Thyroid gland (tissue), 4 donors: ENCODE measurements at regions of chr14 and their contacts with region 1.

Region 1: DNA sequence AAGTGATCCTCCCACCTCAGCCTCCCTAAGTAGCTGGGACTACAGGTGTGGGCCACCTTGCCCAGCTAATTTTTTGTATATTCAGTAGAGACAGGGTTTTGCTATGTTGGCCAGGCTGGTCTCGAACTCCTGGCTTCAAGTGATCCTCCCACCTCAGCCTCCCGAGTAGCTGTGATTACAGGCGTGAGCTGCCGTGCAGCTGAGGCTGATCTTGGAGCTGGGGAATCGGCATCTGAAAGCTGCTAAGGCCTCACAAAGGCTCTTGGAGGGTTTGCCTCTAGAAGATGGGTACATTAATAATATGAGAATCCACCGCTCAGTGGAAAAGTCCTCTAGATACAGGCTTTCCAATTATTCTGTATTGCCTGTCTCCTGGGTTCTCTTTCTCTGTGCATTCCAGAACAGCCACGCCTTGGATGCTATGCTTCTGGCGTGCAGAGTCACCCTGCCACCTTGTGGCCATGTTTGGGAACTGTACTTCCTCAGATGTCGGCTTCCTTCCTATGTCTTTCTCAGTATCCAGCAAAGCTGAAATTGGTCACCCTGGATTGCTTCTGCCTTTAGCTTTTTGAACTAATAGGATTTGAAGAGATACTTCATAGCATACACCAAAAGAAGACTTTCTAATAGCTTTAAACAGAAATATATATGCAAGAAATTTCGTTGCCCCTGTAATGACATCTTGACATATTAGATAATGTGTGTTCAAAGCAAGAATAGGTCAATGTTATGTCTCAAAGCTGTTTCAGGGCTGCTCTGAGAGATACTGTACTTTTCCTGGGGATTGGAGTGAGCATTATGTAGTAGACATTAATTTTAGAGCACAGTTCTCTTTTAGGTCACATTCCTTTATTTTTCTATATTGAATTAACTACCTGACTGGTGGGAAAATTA is 75.4 kb downstream of the SNAPC1 start:
- DNase-seq: peak; percentile 79
- H3K4me3 ChIP-seq: no peak overlapping the region
- H3K27ac ChIP-seq: no peak overlapping the region
- H3K4me1 ChIP-seq: no peaks in the 10 kb centered on the region
- H3K27me3 ChIP-seq: no peaks in the 10 kb centered on the region
- CTCF ChIP-seq: peak; percentile 88 to 93 (median 92)
- POLR2A ChIP-seq: no peak

Region 2: GRCh38 chr14:61296719-61297502 is 540.7 kb before region 1 on chr14:
- intact Hi-C with region 1: loop called (anchors 10 kb)
- DNase-seq: no peak
- H3K4me3 ChIP-seq: no peak overlapping the region
- H3K27ac ChIP-seq: peak overlapping the region in 1 of 3 donors; percentile 5
- H3K4me1 ChIP-seq: no peaks in the 10 kb centered on the region
- H3K27me3 ChIP-seq: no peaks in the 10 kb centered on the region
- CTCF ChIP-seq: peak in 5 of 6 experiments; percentile 41 to 72 (median 64)
- POLR2A ChIP-seq: no peak

Region 3: DNA sequence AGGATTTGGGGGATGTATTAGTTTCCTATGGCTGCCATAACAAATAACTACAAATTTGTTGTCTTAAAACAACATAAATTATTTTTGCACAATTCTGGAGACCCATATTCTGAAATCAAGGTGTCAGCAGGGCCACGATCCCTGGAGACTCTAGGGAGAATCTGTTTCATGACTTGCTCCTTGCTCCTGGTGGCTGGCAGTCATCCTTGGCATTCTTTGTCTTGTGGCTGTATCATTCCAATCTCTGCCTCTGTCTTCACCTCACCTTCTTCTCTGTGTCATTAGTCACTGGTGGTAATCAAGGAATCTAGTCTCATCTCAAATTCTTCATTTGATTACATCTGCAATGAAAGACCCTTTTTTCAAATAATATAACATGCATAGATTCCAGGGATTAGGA is 140.2 kb after region 1 on chr14:
- intact Hi-C with region 1: no loop called
- DNase-seq: no peak
- H3K4me3 ChIP-seq: no peak overlapping the region
- H3K27ac ChIP-seq: no peak overlapping the region
- H3K4me1 ChIP-seq: no peaks in the 10 kb centered on the region
- H3K27me3 ChIP-seq: no peaks in the 10 kb centered on the region
- CTCF ChIP-seq: no peak
- POLR2A ChIP-seq: no peak